Caco-2 (cell line): ENCODE measurements at regions of chr15 and their contacts with region 1.

Region 1: DNA sequence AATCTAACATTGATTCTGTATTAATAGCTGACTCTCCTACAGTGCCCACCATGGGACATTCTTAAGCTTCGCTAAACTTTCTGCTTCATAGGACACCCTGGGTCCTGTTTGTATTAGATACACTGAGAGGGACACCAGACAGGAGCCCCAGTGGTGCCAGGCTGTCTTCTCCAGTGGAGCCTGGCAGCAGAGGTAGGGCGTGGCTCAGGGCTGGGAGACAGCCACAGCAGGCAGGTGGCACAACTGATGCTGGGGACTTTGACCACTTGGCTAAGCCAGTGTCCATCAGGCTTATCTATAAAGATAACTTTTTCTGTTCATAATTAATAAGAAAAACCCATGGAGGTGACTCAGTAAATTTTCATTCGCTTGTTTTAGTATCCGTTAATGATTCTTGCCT is 21.8 kb downstream of the NIPA1 start:
- DNase-seq: no peak
- H3K4me3 ChIP-seq: no peak overlapping the region
- H3K4me3 Mint-ChIP-seq: no peak overlapping the region
- H3K27ac Mint-ChIP-seq: no peak overlapping the region
- H3K4me1 ChIP-seq: peaks cover 4% of the 10 kb centered on the region; the same call in 1 of the 2 replicates
- H3K4me1 Mint-ChIP-seq: no peaks in the 10 kb centered on the region
- H3K27me3 ChIP-seq: no peaks in the 10 kb centered on the region
- H3K27me3 Mint-ChIP-seq: no peaks in the 10 kb centered on the region
- CTCF ChIP-seq: no peak

Region 2: GRCh38 chr15:22831473-22831872 is 23.2 kb after region 1 on chr15:
- CTCF ChIA-PET with region 1: no interaction called
- POLR2A ChIA-PET with region 1: no interaction called
- intact Hi-C with region 1: loop called (anchors 1 kb)
- DNase-seq: no peak
- H3K4me3 ChIP-seq: no peak overlapping the region
- H3K4me3 Mint-ChIP-seq: no peak overlapping the region
- H3K27ac Mint-ChIP-seq: no peak overlapping the region
- H3K4me1 ChIP-seq: no peaks in the 10 kb centered on the region
- H3K4me1 Mint-ChIP-seq: no peaks in the 10 kb centered on the region
- H3K27me3 ChIP-seq: no peaks in the 10 kb centered on the region
- H3K27me3 Mint-ChIP-seq: no peaks in the 10 kb centered on the region
- CTCF ChIP-seq: no peak

Region 3: DNA sequence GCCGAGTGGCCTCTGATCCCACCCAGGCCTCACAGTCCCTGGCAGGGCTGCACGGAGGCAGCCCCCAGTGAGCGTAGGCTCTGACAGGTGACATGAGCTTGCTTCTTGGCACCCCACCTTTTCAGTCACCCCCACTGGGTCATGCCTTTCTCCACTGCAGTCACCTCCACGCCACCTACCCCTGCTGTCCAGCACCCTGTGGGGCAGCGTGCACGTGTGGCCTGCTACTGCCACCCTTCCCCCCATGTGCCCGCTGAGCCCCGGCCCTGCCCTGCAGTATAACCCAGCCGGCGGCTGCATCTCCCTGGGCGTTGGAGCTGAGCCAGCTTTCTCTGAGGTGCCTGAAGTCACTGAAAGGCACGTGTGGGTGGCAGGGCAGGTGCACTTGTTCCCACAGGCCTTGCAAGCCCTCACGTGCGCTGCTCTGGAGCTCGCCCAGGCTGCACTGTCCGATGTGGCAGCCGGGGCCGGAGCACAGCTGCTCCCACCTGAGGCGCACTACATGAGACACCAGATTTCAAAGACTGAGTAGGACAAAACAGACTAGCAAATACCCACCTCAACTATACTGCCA is 95.8 kb after region 1 on chr15:
- CTCF ChIA-PET with region 1: no interaction called
- POLR2A ChIA-PET with region 1: no interaction called
- intact Hi-C with region 1: no loop called
- DNase-seq: no peak
- H3K4me3 ChIP-seq: no peak overlapping the region
- H3K4me3 Mint-ChIP-seq: no peak overlapping the region
- H3K27ac Mint-ChIP-seq: no peak overlapping the region
- H3K4me1 ChIP-seq: no peaks in the 10 kb centered on the region
- H3K4me1 Mint-ChIP-seq: no peaks in the 10 kb centered on the region
- H3K27me3 ChIP-seq: no peaks in the 10 kb centered on the region
- H3K27me3 Mint-ChIP-seq: no peaks in the 10 kb centered on the region
- CTCF ChIP-seq: no peak

Region 4: DNA sequence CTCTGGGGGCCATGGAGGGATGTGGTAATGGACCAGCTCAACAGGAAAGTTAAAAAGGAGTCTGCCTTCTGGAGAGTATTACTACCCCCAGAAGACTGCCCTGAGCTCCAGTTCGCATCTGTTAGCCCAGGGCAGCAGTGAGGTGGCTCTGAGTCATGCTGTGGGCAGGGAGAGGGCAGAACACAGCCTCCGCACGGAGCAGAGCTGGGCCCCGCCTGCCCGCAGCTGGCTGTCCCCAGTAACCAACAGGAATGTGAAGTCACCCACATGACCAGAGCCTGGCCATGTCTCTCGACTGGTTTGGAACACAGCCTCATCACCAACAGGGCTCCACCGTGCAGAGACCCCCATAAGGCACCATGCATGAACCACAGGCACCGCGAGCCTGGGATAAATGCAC is 109.8 kb after region 1 on chr15:
- CTCF ChIA-PET with region 1: no interaction called
- POLR2A ChIA-PET with region 1: no interaction called
- intact Hi-C with region 1: no loop called
- DNase-seq: no peak
- H3K4me3 ChIP-seq: no peak overlapping the region
- H3K4me3 Mint-ChIP-seq: no peak overlapping the region
- H3K27ac Mint-ChIP-seq: no peak overlapping the region
- H3K4me1 ChIP-seq: peaks cover 6% of the 10 kb centered on the region
- H3K4me1 Mint-ChIP-seq: peaks cover 7% of the 10 kb centered on the region
- H3K27me3 ChIP-seq: no peaks in the 10 kb centered on the region
- H3K27me3 Mint-ChIP-seq: no peaks in the 10 kb centered on the region
- CTCF ChIP-seq: no peak